PC-9 (cell line): ENCODE measurements at regions of chr11 and their contacts with region 1.

Region 1: GRCh38 chr11:32297611-32298011 is 137.7 kb downstream of the WT1 start:
- DNase-seq: peak in 1 of 2 experiments; percentile 45
- H3K4me3 ChIP-seq: no peak overlapping the region
- H3K27ac ChIP-seq: no peak overlapping the region
- H3K4me1 ChIP-seq: no peaks in the 10 kb centered on the region
- H3K27me3 ChIP-seq: no peaks in the 10 kb centered on the region
- CTCF ChIP-seq: peak; percentile 67

Region 2: DNA sequence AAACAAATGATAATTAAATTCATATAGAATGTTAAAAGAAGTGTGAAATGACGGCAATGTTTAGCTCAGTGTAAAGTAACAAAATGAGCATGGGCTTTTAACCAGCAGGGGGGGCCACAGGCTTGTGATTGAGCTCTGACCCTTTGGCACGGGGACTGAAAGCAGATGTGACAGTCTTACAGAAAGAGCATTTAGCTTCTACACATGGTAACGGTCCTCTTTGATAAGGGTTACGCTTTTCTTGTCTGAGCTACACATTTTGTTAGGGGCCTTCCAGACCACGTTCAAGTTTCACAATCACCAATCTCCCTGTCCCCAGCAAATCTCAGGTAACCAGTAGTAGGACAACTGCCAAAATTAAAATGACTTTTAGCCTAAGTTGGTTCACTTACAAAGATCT is 1190.5 kb before region 1 on chr11:
- CTCF ChIA-PET with region 1: no interaction called
- POLR2A ChIA-PET with region 1: no interaction called
- intact Hi-C with region 1: loop called (anchors 1 kb)
- DNase-seq: peak; percentile 42 to 60
- H3K4me3 ChIP-seq: no peak overlapping the region
- H3K27ac ChIP-seq: no peak overlapping the region
- H3K4me1 ChIP-seq: no peaks in the 10 kb centered on the region
- H3K27me3 ChIP-seq: no peaks in the 10 kb centered on the region
- CTCF ChIP-seq: peak; percentile 87

Region 3: DNA sequence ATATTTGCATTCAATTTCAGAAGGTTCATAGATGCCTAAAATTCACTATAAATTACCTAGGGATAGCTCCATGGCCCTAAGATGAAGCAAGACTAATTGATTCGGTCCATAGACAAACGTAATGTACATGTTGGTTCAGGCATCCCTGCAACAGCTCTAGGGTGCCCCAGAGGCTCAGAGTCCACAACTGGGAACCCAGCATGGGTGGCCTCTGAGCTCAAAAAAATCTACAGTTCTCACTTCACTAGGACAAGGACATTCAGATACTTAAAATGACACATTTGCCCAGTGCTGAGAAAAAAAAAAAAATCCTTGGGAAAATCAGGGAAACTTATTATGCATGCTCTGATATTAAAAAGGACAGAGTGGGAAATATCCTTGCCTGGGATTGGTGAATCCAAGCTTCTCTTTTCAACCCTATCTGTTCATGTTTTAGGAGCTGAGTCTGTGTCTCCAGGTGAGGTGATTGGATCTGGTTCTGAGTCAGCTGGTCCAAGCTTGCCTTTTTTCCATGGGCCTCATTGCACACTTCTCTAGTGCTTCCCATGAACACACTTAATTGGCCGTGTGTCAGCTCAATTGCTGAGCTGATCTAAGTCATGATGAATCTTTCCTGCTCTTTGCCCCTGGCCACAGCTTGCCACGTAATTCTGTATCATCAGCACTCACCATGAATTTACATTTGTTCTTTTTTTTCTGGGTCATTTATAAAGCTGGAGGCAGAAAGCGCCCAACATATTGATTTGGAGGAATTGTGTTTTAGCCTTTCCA is 323.1 kb before region 1 on chr11:
- CTCF ChIA-PET with region 1: interaction called, 11 read pairs
- POLR2A ChIA-PET with region 1: no interaction called
- intact Hi-C with region 1: no loop called
- DNase-seq: peak in 1 of 2 experiments; percentile 65
- H3K4me3 ChIP-seq: no peak overlapping the region
- H3K27ac ChIP-seq: peak overlapping the region; percentile 30
- H3K4me1 ChIP-seq: peaks cover 15% of the 10 kb centered on the region
- H3K27me3 ChIP-seq: no peaks in the 10 kb centered on the region
- CTCF ChIP-seq: no peak

Region 4: DNA sequence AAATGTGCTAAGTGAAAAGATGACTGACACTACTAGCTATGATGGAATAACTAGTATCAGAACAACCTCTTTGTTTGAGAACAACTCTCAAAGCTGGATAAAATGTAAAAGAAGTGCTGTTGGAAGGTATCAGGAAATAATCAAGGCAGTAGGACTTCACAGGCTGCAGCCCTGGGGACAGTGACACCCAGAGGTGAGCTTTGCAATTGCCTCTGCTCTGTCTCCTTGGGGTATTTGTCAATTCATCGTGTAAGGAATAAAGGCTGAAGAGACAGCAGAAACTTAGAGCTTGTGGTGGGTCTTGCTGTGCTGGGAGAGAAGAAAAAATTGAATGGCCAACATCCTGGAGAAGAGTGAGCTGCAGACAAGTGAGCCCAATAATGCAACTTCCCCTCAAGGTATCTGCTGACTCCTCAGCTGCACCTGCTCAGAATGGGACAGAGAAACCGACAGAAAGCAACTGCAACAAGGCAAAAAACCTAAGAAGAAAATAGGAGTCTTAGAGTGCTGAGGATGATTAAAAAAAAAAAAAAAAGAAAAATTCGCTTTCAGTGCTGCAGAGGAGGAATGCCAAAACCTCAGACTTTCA is 65.6 kb before region 1 on chr11:
- CTCF ChIA-PET with region 1: no interaction called
- POLR2A ChIA-PET with region 1: interaction called, 10 read pairs
- intact Hi-C with region 1: no loop called
- DNase-seq: peak in 1 of 2 experiments; percentile 32
- H3K4me3 ChIP-seq: no peak overlapping the region
- H3K27ac ChIP-seq: no peak overlapping the region
- H3K4me1 ChIP-seq: no peaks in the 10 kb centered on the region
- H3K27me3 ChIP-seq: no peaks in the 10 kb centered on the region
- CTCF ChIP-seq: peak; percentile 77

Region 5: DNA sequence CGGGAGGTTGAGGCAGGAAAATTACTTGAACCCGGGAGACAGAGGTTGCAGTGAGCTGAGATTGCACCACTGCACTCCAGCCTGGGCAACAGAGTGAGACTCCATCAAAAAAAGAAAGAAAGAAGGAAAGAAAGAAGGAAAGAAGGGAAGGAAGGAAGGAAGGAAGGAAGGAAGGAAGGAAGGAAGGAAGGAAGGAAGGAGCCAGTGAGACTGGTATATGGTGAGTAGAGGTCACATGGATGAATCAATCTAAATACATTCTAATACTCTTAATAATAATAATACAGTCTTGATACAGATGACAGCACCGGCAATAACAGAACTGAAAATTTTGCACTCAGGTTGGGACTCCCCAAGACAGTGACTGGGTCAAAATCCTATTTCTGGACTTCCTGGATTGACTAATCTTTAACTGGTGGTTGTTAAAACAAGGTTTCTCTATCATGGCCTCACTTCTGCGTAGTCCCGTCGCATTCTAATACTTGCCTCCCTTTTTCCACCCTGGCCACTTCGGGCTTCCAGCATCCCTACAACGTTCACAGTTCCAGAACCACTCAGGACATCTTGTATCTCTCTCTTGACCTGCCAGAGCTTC is 232.5 kb after region 1 on chr11:
- CTCF ChIA-PET with region 1: no interaction called
- POLR2A ChIA-PET with region 1: no interaction called
- intact Hi-C with region 1: no loop called
- DNase-seq: no peak
- H3K4me3 ChIP-seq: no peak overlapping the region
- H3K27ac ChIP-seq: no peak overlapping the region
- H3K4me1 ChIP-seq: peaks cover 7% of the 10 kb centered on the region; the same call in 1 of the 2 replicates
- H3K27me3 ChIP-seq: no peaks in the 10 kb centered on the region
- CTCF ChIP-seq: no peak